Heart left ventricle (tissue), 16 donors: ENCODE measurements at regions of chr3 and their contacts with region 1.

Region 1: DNA sequence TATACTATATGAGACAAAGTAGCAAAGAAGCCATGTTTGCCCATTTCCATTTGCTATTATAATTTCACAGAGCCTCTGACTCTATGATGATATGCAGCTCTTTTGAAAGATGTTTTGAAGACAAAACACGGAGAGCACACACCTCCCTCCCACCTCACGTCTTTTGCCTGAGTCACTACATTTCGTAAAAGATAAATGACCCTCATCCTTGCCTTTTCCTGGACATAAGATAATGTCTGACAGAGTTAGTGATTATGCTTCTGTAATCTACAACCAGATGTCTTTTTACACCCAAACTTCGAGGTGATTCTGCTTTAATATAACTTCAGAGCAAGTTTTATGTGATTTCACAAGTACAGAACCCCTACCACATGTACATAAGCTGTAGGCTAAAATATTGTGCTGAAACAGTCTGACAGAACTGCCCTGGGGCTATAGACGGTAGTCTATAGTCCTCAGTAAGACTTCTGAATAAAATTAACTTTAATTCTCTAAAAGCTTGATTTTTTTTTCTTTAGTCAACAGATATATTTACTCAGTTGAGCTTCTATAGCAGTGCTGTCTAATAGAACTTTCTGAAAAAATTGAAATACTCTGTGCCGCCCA is 99.9 kb downstream of the CD200R1L start:
- DNase-seq: no peak
- ATAC-seq: peak in 1 of 4 donors; percentile 64
- H3K4me3 ChIP-seq: no peak overlapping the region
- H3K27ac ChIP-seq: peak overlapping the region in 2 of 12 donors; percentile 8 to 55
- H3K4me1 ChIP-seq: peaks cover 0 to 25% (median 12%) of the 10 kb centered on the region in 12 donors
- H3K27me3 ChIP-seq: no peaks in the 10 kb centered on the region
- CTCF ChIP-seq: no peak
- POLR2A ChIP-seq: no peak

Region 2: DNA sequence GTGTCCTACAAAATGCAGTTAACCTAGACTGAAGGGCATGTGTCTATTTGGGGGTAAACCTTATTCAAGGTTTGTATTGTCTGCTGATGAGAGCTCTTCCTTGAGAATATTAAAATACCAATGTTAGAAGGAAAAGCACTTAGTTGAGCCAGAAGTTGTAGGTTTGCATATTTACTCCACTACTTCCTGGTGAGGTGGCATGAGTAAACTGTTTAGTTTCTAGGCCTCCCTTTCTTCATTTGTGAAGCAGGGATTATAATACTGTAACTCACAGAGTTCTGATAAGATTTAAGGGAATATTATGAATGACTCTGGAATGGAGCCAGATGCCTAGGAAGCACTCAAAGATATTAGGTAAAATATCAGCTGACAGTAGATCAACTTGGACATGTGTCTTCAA is 53.2 kb after region 1 on chr3:
- intact Hi-C with region 1: loop called in 1 of 10 experiments (anchors 10 kb)
- DNase-seq: no peak
- ATAC-seq: no peak
- H3K4me3 ChIP-seq: no peak overlapping the region
- H3K27ac ChIP-seq: no peak overlapping the region
- H3K4me1 ChIP-seq: peaks cover 0 to 9% (median 0%) of the 10 kb centered on the region in 12 donors
- H3K27me3 ChIP-seq: no peaks in the 10 kb centered on the region
- CTCF ChIP-seq: no peak
- POLR2A ChIP-seq: no peak